Right lobe of liver (tissue), 6 donors: ENCODE measurements at regions of chr22 and their contacts with region 1.

Region 1: GRCh38 chr22:30920407-30920806 is 48.2 kb downstream of the MORC2 start:
- DNase-seq: peak; percentile 76 to 81 (median 78)
- ATAC-seq: peak; percentile 75 to 81 (median 79)
- H3K4me3 ChIP-seq: no peak overlapping the region
- H3K27ac ChIP-seq: no peak overlapping the region
- H3K4me1 ChIP-seq: peaks cover 0 to 3% (median 0%) of the 10 kb centered on the region in 4 donors
- H3K27me3 ChIP-seq: no peaks in the 10 kb centered on the region
- CTCF ChIP-seq: peak; percentile 78 to 97 (median 94)
- POLR2A ChIP-seq: no peak

Region 2: GRCh38 chr22:30628491-30628890 is 291.9 kb before region 1 on chr22:
- intact Hi-C with region 1: loop called in 1 of 2 experiments (anchors 10 kb)
- DNase-seq: no peak
- ATAC-seq: no peak
- H3K4me3 ChIP-seq: no peak overlapping the region
- H3K27ac ChIP-seq: no peak overlapping the region
- H3K4me1 ChIP-seq: no peaks in the 10 kb centered on the region
- H3K27me3 ChIP-seq: no peaks in the 10 kb centered on the region
- CTCF ChIP-seq: no peak
- POLR2A ChIP-seq: no peak

Region 3: GRCh38 chr22:30763815-30764686 is 156.4 kb before region 1 on chr22:
- intact Hi-C with region 1: loop called (anchors 10 kb)
- DNase-seq: peak in 1 of 3 donors; percentile 54
- ATAC-seq: peak; percentile 64 to 85 (median 76)
- H3K4me3 ChIP-seq: no peak overlapping the region
- H3K27ac ChIP-seq: no peak overlapping the region
- H3K4me1 ChIP-seq: no peaks in the 10 kb centered on the region
- H3K27me3 ChIP-seq: no peaks in the 10 kb centered on the region
- CTCF ChIP-seq: peak; percentile 51 to 62 (median 52)
- POLR2A ChIP-seq: no peak

Region 4: GRCh38 chr22:30816413-30816812 is 104.0 kb before region 1 on chr22:
- intact Hi-C with region 1: no loop called
- DNase-seq: no peak
- ATAC-seq: peak in 3 of 4 donors; percentile 48 to 68 (median 58)
- H3K4me3 ChIP-seq: no peak overlapping the region
- H3K27ac ChIP-seq: no peak overlapping the region
- H3K4me1 ChIP-seq: no peaks in the 10 kb centered on the region
- H3K27me3 ChIP-seq: no peaks in the 10 kb centered on the region
- CTCF ChIP-seq: peak in 3 of 4 donors; percentile 21 to 30 (median 22)
- POLR2A ChIP-seq: no peak

Region 5: DNA sequence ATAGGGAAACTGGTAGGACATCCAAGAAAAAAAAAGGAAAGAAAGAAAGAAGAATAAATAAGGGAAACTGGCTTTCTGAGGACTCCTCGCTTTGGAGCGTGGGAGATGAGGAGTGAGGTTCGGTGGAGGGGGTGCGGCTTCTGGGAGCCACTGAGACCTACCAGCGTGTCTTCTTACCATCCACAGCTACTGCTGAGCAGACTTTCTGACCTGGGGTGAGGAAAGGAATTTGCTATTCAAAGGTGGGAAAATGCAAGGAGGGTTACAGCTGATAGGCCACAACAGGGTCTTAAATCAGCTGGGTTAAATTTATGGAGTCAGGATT is 187.4 kb after region 1 on chr22:
- intact Hi-C with region 1: no loop called
- DNase-seq: no peak
- ATAC-seq: peak in 2 of 4 donors; percentile 1 to 14
- H3K4me3 ChIP-seq: peak overlapping the region in 2 of 3 donors; percentile 35 to 54
- H3K27ac ChIP-seq: peak overlapping the region in 1 of 3 donors; percentile 20
- H3K4me1 ChIP-seq: peaks cover 0 to 7% (median 0%) of the 10 kb centered on the region in 4 donors
- H3K27me3 ChIP-seq: no peaks in the 10 kb centered on the region
- CTCF ChIP-seq: no peak
- POLR2A ChIP-seq: no peak